ENCODE measurements at regions of chr1 and their contacts with region 1.

Region 1: DNA sequence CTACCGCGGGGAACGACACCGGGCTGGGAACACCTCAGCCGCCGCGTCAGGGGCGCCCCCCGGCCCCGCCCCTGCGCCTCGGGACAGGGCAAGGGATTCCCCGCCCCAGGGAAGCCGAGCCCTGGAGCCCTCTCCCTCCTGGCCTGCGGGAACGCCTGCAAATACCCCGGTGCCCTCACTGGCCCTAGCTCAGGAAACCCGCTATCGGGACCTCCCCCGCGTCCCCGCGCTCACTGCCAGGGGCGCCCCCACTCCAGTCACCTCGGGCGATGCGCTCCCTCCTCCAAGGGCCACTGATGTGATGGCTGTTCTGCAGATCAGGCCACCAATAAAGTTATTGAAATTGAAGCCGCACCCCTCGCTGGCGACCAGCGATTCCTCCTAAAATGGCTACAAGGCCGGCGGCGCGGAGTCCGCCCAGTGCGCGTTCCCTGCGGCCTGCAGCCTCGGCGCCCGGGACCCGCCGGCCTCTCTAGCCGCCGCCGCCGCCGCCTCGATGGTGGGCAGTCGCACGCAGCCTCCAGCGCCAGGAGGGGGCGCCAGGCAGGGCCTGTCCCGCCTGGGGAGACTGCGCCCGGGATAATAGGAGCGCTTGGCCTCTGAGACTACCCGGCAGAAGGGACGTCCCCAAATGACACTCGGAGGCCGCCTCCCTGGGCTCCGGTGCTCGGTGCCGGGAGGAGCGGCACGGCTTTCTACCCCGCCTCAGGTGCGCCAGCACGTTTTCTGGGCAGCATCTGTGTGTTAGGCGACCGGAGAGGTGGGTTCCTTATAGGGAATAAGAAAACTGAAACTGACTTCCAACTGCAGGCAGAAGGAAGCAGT is at the start of gene PRKAB2:
- DNase-seq: peak; percentile 97
- H3K4me3 Mint-ChIP-seq: peak within 1 kb of the TSS; percentile 95
- H3K27ac Mint-ChIP-seq: peak within 1 kb of the TSS; percentile 98
- H3K4me1 Mint-ChIP-seq: peaks cover 46% of the 10 kb centered on the region
- H3K27me3 Mint-ChIP-seq: no peaks in the 10 kb centered on the region
- CTCF ChIP-seq: peak; percentile 98
- total RNA-seq, gene PRKAB2: 35.1 and 47.6 TPM in 2 replicates

Region 2: GRCh38 chr1:147084273-147085096 is 87.9 kb before region 1 on chr1:
- CTCF ChIA-PET with region 1: no interaction called
- POLR2A ChIA-PET with region 1: interaction called, 45 read pairs
- intact Hi-C with region 1: loop called (anchors 2 kb)
- DNase-seq: peak; percentile 91
- H3K4me3 Mint-ChIP-seq: peak overlapping the region; percentile 85
- H3K27ac Mint-ChIP-seq: peak overlapping the region; percentile 100
- H3K4me1 Mint-ChIP-seq: peaks cover 5% of the 10 kb centered on the region
- H3K27me3 Mint-ChIP-seq: peaks cover 20% of the 10 kb centered on the region
- CTCF ChIP-seq: no peak

Region 3: DNA sequence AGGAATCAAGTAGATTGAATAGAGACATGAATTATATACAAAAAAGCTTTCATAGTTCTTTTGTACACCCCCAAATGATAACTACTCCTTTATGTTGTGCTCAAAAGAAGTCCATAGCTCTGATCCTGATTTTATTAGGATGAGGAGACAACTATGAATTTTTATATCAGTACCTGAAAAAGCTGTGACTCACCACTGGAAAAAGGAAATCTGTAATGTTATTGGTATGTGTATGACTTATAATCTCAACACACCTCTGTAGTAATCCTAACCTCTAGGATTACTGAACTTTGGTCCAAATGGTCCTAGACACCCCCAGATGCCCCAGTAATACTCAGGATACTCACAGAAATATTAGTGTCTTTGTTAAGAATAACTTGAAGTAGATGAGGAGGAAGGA is 10.3 kb before region 1 on chr1:
- CTCF ChIA-PET with region 1: interaction called, 11 read pairs
- POLR2A ChIA-PET with region 1: interaction called, 26 read pairs
- intact Hi-C with region 1: no loop called
- DNase-seq: peak; percentile 23
- H3K4me3 Mint-ChIP-seq: no peak overlapping the region
- H3K27ac Mint-ChIP-seq: peak overlapping the region; percentile 83
- H3K4me1 Mint-ChIP-seq: peaks cover 25% of the 10 kb centered on the region
- H3K27me3 Mint-ChIP-seq: no peaks in the 10 kb centered on the region
- CTCF ChIP-seq: no peak

Region 4: DNA sequence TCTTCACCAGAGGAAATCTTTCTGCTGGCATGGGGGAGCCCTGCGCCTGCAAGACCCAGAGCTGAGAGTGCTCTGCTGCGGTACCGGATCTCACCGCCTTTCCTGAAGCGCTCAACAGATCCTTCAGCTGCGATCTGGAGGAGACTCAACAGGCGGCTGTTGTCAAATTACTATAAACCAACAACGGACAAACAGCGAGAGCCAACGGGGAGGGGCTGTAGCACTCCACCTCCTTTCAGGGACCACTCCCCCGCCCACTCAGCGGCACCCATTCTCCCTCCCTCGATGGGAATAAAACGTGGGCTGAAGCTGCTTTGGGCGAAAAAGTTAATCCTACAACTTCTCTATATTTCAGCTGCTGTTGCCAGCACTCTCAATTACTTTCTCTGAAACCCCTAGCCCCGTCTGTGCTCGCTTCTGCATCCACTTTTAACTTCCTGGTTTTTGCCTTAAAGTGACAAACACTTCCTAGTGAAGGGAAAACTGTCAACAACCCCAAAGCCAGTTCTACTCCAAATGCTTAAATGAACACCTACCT is 52.9 kb after region 1 on chr1 and contains the start of gene FMO5:
- CTCF ChIA-PET with region 1: interaction called, 3 read pairs
- POLR2A ChIA-PET with region 1: interaction called, 39 read pairs
- intact Hi-C with region 1: loop called (anchors 5 kb)
- DNase-seq: peak; percentile 55
- H3K4me3 Mint-ChIP-seq: peak within 1 kb of the TSS; percentile 78
- H3K27ac Mint-ChIP-seq: peak within 1 kb of the TSS; percentile 94
- H3K4me1 Mint-ChIP-seq: peaks cover 10% of the 10 kb centered on the region
- H3K27me3 Mint-ChIP-seq: no peaks in the 10 kb centered on the region
- CTCF ChIP-seq: no peak
- total RNA-seq, gene FMO5: 0.72 and 0.86 TPM in 2 replicates

Region 5: DNA sequence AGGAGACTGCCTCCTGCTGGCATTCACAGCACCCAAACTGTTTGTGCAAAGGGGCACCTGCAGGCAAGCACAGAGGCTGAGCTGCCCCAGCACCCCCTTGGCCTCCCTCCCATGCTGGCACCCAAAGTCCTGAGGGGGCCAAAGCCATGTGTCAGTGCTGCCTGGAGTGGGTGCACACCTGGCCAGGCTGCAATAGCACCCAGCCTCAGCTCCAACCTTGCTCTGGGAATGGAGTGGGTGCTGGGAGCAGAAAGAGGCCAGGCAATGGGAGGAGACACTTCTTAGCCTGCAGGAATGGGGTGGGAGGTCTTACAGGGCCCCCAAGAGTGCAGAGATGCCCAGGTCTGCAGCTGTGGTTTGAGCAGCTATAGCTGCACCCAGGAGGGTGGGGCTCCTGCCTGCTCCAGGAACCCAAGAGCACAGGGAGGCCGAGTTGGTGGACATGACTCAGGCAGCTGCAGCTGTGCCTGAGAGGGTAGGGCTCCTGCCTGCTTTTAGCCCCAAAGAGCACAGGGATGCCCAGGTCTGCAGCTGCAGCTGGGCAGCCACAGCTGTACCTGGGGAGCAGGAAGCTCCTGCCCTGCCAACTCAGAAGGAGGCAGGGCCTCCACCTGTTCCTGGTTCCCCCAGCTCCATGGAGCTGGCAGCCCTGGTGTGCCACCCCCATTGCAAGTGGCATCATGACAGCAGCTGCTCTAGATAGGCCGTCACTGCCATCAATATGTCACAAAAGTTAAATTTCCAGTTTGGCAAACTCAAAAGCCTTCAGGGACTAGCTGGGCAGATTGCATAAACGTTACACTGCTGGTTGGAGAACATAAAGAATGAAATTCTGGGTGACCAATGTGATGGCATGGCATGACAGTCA is 64.8 kb after region 1 on chr1:
- CTCF ChIA-PET with region 1: interaction called, 131 read pairs
- POLR2A ChIA-PET with region 1: interaction called, 298 read pairs
- intact Hi-C with region 1: no loop called
- DNase-seq: peak; percentile 23
- H3K4me3 Mint-ChIP-seq: no peak overlapping the region
- H3K27ac Mint-ChIP-seq: no peak overlapping the region
- H3K4me1 Mint-ChIP-seq: peaks cover 11% of the 10 kb centered on the region
- H3K27me3 Mint-ChIP-seq: no peaks in the 10 kb centered on the region
- CTCF ChIP-seq: no peak

Region 6: GRCh38 chr1:147273409-147274336 is 101.3 kb after region 1 on chr1:
- CTCF ChIA-PET with region 1: interaction called, 4 read pairs
- POLR2A ChIA-PET with region 1: interaction called, 16 read pairs
- intact Hi-C with region 1: no loop called
- DNase-seq: peak; percentile 92
- H3K4me3 Mint-ChIP-seq: peak overlapping the region; percentile 55
- H3K27ac Mint-ChIP-seq: peak overlapping the region; percentile 93
- H3K4me1 Mint-ChIP-seq: peaks cover 14% of the 10 kb centered on the region
- H3K27me3 Mint-ChIP-seq: no peaks in the 10 kb centered on the region
- CTCF ChIP-seq: peak; percentile 37

Region 7: GRCh38 chr1:147389532-147390524 is 217.4 kb after region 1 on chr1:
- CTCF ChIA-PET with region 1: interaction called, 3 read pairs
- POLR2A ChIA-PET with region 1: no interaction called
- intact Hi-C with region 1: loop called (anchors 1 kb)
- DNase-seq: peak; percentile 67
- H3K4me3 Mint-ChIP-seq: no peak overlapping the region
- H3K27ac Mint-ChIP-seq: no peak overlapping the region
- H3K4me1 Mint-ChIP-seq: no peaks in the 10 kb centered on the region
- H3K27me3 Mint-ChIP-seq: peaks cover 38% of the 10 kb centered on the region
- CTCF ChIP-seq: peak; percentile 91